CD8-positive, alpha-beta T cell (primary cell): ENCODE measurements at regions of chr3 and their contacts with region 1.

Region 1: DNA sequence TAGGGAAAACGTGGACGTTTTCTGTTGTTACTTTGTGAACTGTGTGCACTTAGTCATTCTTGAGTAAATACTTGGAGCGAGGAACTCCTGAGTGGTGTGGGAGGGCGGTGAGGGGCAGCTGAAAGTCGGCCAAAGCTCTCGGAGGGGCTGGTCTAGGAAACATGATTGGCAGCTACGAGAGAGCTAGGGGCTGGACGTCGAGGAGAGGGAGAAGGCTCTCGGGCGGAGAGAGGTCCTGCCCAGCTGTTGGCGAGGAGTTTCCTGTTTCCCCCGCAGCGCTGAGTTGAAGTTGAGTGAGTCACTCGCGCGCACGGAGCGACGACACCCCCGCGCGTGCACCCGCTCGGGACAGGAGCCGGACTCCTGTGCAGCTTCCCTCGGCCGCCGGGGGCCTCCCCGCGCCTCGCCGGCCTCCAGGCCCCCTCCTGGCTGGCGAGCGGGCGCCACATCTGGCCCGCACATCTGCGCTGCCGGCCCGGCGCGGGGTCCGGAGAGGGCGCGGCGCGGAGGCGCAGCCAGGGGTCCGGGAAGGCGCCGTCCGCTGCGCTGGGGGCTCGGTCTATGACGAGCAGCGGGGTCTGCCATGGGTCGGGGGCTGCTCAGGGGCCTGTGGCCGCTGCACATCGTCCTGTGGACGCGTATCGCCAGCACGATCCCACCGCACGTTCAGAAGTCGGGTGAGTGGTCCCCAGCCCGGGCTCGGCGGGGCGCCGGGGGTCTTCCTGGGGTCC is at the start of gene TGFBR2:
- DNase-seq: peak; percentile 59 to 92 (median 85)
- ATAC-seq: peak; percentile 70
- H3K4me3 ChIP-seq: peak within 1 kb of the TSS; percentile 94 to 96
- H3K4me3 Mint-ChIP-seq: peak within 1 kb of the TSS; percentile 94
- H3K27ac ChIP-seq: peak within 1 kb of the TSS; percentile 83 to 94
- H3K27ac Mint-ChIP-seq: peak within 1 kb of the TSS; percentile 98
- H3K4me1 ChIP-seq: peaks cover 48% of the 10 kb centered on the region
- H3K4me1 Mint-ChIP-seq: peaks cover 59% of the 10 kb centered on the region
- H3K27me3 ChIP-seq: no peaks in the 10 kb centered on the region
- H3K27me3 Mint-ChIP-seq: no peaks in the 10 kb centered on the region
- CTCF ChIP-seq: no peak
- total RNA-seq, gene TGFBR2: 191 to 197 TPM

Region 2: DNA sequence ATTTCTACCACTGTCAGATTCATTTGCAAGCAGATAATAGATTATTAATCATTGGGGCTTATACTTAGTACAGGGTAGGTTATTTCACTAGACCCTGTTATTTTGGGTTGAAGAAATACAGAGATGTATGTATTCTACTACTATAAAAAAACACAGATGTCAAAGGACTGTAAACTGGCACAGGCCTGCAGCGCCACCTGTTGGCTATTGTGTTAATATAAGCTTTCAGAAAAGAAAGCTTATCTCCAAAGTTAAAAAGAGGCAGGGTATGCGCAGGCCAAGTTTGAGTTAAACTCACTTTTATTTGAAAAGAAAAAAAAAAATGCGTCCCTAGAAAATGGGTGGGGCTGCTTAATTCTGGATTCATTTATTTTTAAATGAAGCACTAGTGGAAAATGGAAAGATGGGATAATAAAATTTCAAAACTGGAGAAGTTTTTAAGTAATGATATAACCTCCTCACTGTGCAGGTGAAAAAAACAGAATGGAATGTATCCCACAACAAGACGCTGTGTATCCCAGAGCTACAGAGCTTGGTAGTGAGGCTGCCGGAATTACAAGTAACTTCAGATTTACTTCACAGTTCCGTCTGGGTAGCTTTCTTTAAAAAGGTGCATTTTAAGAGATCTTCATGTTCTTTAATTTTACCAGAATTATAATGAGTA is 407.2 kb before region 1 on chr3:
- CTCF ChIA-PET with region 1: no interaction called
- POLR2A ChIA-PET with region 1: no interaction called
- intact Hi-C with region 1: loop called in 1 of 2 experiments (anchors 10 kb)
- DNase-seq: peak; percentile 35 to 79 (median 65)
- ATAC-seq: peak; percentile 46
- H3K4me3 ChIP-seq: no peak overlapping the region
- H3K4me3 Mint-ChIP-seq: no peak overlapping the region
- H3K27ac ChIP-seq: no peak overlapping the region
- H3K27ac Mint-ChIP-seq: no peak overlapping the region
- H3K4me1 ChIP-seq: no peaks in the 10 kb centered on the region
- H3K4me1 Mint-ChIP-seq: no peaks in the 10 kb centered on the region
- H3K27me3 ChIP-seq: no peaks in the 10 kb centered on the region
- H3K27me3 Mint-ChIP-seq: no peaks in the 10 kb centered on the region
- CTCF ChIP-seq: peak; percentile 97

Region 3: GRCh38 chr3:30437171-30437601 is 169.3 kb before region 1 on chr3:
- CTCF ChIA-PET with region 1: no interaction called
- POLR2A ChIA-PET with region 1: interaction called, 6 read pairs
- intact Hi-C with region 1: loop called in 1 of 2 experiments (anchors 5 kb)
- DNase-seq: no peak
- ATAC-seq: no peak
- H3K4me3 ChIP-seq: no peak overlapping the region
- H3K4me3 Mint-ChIP-seq: no peak overlapping the region
- H3K27ac ChIP-seq: no peak overlapping the region
- H3K27ac Mint-ChIP-seq: no peak overlapping the region
- H3K4me1 ChIP-seq: peaks cover 22% of the 10 kb centered on the region
- H3K4me1 Mint-ChIP-seq: peaks cover 31% of the 10 kb centered on the region
- H3K27me3 ChIP-seq: no peaks in the 10 kb centered on the region
- H3K27me3 Mint-ChIP-seq: no peaks in the 10 kb centered on the region
- CTCF ChIP-seq: no peak

Region 4: GRCh38 chr3:30628901-30629590 is 22.6 kb after region 1 on chr3:
- CTCF ChIA-PET with region 1: interaction called, 8 read pairs
- POLR2A ChIA-PET with region 1: interaction called, 13 read pairs
- intact Hi-C with region 1: loop called in 1 of 2 experiments (anchors 1 kb)
- DNase-seq: peak in 2 of 9 experiments; percentile 57 to 76
- ATAC-seq: peak; percentile 9
- H3K4me3 ChIP-seq: peak overlapping the region in 1 of 2 experiments; percentile 19
- H3K4me3 Mint-ChIP-seq: peak overlapping the region; percentile 52
- H3K27ac ChIP-seq: peak overlapping the region; percentile 43 to 78
- H3K27ac Mint-ChIP-seq: peak overlapping the region; percentile 94
- H3K4me1 ChIP-seq: peaks cover 97% of the 10 kb centered on the region
- H3K4me1 Mint-ChIP-seq: peaks cover 92% of the 10 kb centered on the region
- H3K27me3 ChIP-seq: no peaks in the 10 kb centered on the region
- H3K27me3 Mint-ChIP-seq: no peaks in the 10 kb centered on the region
- CTCF ChIP-seq: peak; percentile 9

Region 5: GRCh38 chr3:30644593-30645012 is 38.1 kb after region 1 on chr3:
- CTCF ChIA-PET with region 1: interaction called, 4 read pairs
- POLR2A ChIA-PET with region 1: interaction called, 14 read pairs
- intact Hi-C with region 1: loop called in 1 of 2 experiments (anchors 5 kb)
- DNase-seq: peak in 8 of 9 experiments; percentile 26 to 86 (median 62)
- ATAC-seq: peak; percentile 67
- H3K4me3 ChIP-seq: peak overlapping the region in 1 of 2 experiments; percentile 13
- H3K4me3 Mint-ChIP-seq: peak overlapping the region; percentile 59
- H3K27ac ChIP-seq: peak overlapping the region; percentile 50 to 77
- H3K27ac Mint-ChIP-seq: peak overlapping the region; percentile 92
- H3K4me1 ChIP-seq: peaks cover 100% of the 10 kb centered on the region
- H3K4me1 Mint-ChIP-seq: peaks cover 94% of the 10 kb centered on the region
- H3K27me3 ChIP-seq: no peaks in the 10 kb centered on the region
- H3K27me3 Mint-ChIP-seq: no peaks in the 10 kb centered on the region
- CTCF ChIP-seq: no peak

Region 6: DNA sequence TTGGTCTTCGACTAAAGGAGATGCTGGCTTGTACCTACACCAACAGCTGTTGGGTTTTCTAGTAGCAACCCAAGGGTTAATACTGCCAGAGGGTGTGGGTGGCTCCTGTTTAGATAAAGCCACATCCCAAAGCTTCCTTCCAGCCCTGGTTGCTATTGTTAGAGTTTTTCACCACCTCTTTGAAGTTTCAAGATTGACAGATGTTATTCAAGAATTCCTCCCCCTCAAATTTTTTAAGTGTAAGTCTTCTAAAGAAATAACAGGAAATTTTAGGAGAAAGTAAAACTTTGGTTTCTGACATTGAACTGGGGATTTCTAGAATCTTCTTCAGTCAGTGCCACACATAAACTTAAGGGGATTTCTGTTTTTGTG is 60.8 kb after region 1 on chr3:
- CTCF ChIA-PET with region 1: interaction called, 14 read pairs
- POLR2A ChIA-PET with region 1: interaction called, 9 read pairs
- intact Hi-C with region 1: loop called in 1 of 2 experiments (anchors 2 kb)
- DNase-seq: peak in 2 of 9 experiments; percentile 48 to 76
- ATAC-seq: peak; percentile 39
- H3K4me3 ChIP-seq: no peak overlapping the region
- H3K4me3 Mint-ChIP-seq: peak overlapping the region; percentile 45
- H3K27ac ChIP-seq: peak overlapping the region in 1 of 2 experiments; percentile 61
- H3K27ac Mint-ChIP-seq: peak overlapping the region; percentile 91
- H3K4me1 ChIP-seq: peaks cover 98% of the 10 kb centered on the region
- H3K4me1 Mint-ChIP-seq: peaks cover 96% of the 10 kb centered on the region
- H3K27me3 ChIP-seq: no peaks in the 10 kb centered on the region
- H3K27me3 Mint-ChIP-seq: no peaks in the 10 kb centered on the region
- CTCF ChIP-seq: no peak

Region 7: GRCh38 chr3:31960793-31961431 is 1354.4 kb after region 1 on chr3:
- CTCF ChIA-PET with region 1: no interaction called
- POLR2A ChIA-PET with region 1: no interaction called
- intact Hi-C with region 1: no loop called
- DNase-seq: no peak
- ATAC-seq: no peak
- H3K4me3 ChIP-seq: no peak overlapping the region
- H3K4me3 Mint-ChIP-seq: no peak overlapping the region
- H3K27ac ChIP-seq: no peak overlapping the region
- H3K27ac Mint-ChIP-seq: no peak overlapping the region
- H3K4me1 ChIP-seq: no peaks in the 10 kb centered on the region
- H3K4me1 Mint-ChIP-seq: peaks cover 7% of the 10 kb centered on the region
- H3K27me3 ChIP-seq: no peaks in the 10 kb centered on the region
- H3K27me3 Mint-ChIP-seq: no peaks in the 10 kb centered on the region
- CTCF ChIP-seq: no peak